ENCODE measurements at regions of chr3 and their contacts with region 1.

Region 1: GRCh38 chr3:115092220-115092791 is 54.8 kb downstream of the ZBTB20 start:
- DNase-seq: peak in 1 of 2 experiments; percentile 40
- H3K4me3 ChIP-seq: no peak overlapping the region
- H3K27ac ChIP-seq: no peak overlapping the region
- H3K4me1 ChIP-seq: no peaks in the 10 kb centered on the region
- H3K27me3 ChIP-seq: no peaks in the 10 kb centered on the region
- CTCF ChIP-seq: peak; percentile 75

Region 2: DNA sequence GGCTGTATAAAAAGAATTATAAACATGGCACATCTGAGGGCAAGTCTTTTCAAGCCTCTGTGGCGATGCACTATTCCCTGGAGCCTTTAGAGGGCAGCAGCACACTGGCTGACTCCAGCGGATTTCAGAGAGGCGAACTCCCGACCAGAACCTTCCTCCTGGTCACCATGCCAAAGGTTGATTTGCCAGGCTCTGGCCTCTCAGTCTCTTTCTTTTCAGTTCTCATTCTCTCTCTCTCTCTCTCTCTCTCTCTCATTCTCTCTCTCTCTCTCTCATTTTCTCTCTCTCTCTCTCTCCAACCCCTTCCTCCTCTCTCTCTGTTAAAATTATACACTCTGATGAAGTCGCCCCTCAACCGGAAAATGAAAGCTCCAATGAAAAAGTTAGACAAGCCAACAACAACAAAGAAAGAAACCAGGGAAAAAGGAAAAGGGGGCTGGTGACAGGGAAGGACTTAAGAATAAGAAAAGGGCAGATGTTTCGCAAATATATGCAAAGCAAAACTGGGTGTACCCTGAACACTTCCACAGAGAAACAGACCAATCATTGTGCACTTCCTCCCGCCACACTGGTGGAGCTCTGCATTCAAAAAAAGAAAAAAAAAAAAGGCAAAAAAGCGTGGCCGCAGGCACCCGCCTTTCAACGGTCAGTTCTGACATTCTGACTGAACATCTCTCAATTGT is 708.3 kb before region 1 on chr3:
- CTCF ChIA-PET with region 1: no interaction called
- POLR2A ChIA-PET with region 1: no interaction called
- intact Hi-C with region 1: loop called (anchors 5 kb)
- DNase-seq: peak; percentile 38 to 65
- H3K4me3 ChIP-seq: no peak overlapping the region
- H3K27ac ChIP-seq: no peak overlapping the region
- H3K4me1 ChIP-seq: no peaks in the 10 kb centered on the region; the same call in 1 of the 2 replicates
- H3K27me3 ChIP-seq: no peaks in the 10 kb centered on the region
- CTCF ChIP-seq: peak; percentile 93